Activated T-helper 1 cell treated with anti-CD3 and anti-CD28 coated beads, Interleukin-12 subunit alpha, Interleukin-12 subunit beta, Interleukin-2, Interleukin-4 antibody, amounts not matched to agents 30 ng/mL and 10 ng/mL and 1 ng/mL, durations not matched to agents 14 hours and 24 hours and 36 hours (primary cell): ENCODE measurements at regions of chr10 and their contacts with region 1.

Region 1: DNA sequence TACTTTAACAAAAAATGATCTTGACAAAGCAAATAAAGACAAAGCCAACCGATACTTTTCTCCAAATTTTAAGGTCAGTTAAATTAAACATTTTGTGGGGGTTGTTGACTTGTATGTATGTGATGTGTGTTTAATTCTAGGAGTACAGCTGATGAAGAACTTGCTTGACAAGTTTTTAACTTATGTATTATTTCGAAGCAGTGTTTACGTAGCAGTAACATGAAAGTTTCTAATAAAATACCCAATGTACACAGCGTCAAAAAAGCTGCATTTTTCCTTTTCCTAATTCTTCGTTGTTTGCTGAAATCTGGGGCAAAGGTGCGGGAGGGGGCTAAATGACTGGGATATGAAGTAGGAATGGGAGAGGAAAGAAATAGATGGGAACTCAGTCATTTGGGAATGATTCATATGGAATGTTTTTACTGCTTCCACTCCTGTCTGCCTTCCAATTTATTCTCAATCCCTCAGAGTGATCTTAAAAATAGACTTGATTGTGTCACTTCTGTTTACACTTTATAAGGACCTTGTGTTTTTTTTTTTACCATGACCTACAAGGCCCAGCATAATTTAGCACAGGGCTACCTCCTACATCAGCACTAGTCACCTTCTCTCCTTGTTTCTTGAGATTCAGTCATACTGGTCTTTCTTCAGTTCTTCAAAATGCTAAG is 97.8 kb downstream of the PTEN start:
- DNase-seq: no peak
- H3K4me3 Mint-ChIP-seq: no peak overlapping the region
- H3K27ac Mint-ChIP-seq: no peak overlapping the region
- H3K4me1 Mint-ChIP-seq: peaks cover 5% of the 10 kb centered on the region
- H3K27me3 Mint-ChIP-seq: no peaks in the 10 kb centered on the region

Region 2: GRCh38 chr10:87942884-87943527 is 18.2 kb before region 1 on chr10:
- intact Hi-C with region 1: no loop called
- DNase-seq: no peak
- H3K4me3 Mint-ChIP-seq: no peak overlapping the region
- H3K27ac Mint-ChIP-seq: no peak overlapping the region
- H3K4me1 Mint-ChIP-seq: peaks cover 18% of the 10 kb centered on the region
- H3K27me3 Mint-ChIP-seq: no peaks in the 10 kb centered on the region

Region 3: GRCh38 chr10:88038268-88038667 is 77.1 kb after region 1 on chr10:
- intact Hi-C with region 1: loop called (anchors 5 kb)
- DNase-seq: no peak
- H3K4me3 Mint-ChIP-seq: no peak overlapping the region
- H3K27ac Mint-ChIP-seq: no peak overlapping the region
- H3K4me1 Mint-ChIP-seq: peaks cover 12% of the 10 kb centered on the region
- H3K27me3 Mint-ChIP-seq: peaks cover 6% of the 10 kb centered on the region